ENCODE measurements at regions of chr10 and their contacts with region 1.

Region 1: DNA sequence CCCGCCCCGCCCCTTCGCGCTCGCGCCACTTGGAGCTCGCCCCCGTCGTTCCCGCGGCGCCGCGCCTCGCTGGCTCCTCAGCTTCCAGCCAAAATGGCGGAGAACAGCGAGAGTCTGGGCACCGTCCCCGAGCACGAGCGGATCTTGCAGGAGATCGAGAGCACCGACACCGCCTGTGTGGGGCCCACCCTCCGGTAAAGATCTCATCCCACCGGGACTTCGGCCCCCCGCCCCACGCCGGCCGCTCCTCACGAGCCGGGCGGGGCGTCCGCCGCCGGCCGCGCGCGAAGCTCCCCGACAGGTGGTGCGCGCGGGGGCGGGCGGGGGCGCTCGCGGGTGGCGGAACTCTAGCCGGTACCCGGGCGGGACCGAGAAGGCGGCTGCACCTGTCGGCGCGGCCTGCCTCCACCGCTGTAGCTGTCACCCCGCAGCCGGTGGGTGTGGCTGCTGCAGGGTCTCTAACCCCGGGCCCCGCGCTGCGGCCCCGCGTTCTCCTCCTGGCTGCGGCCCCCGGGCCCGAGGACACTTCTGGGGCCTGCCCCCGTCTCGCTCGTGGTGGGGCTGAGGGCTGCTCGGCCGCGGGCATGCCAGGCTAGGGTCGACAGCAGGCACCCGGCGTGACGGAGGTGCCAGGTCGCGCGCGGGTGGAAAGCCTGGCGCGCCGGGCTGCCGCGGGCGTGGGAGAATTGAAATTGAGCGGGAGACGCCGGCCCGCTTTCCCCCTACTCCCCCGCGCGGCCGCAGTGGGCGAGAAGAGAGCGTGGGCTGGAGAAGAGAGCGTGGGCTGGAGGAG is at the start of gene EXOC6:
- DNase-seq: peak; percentile 77 to 94 (median 85)
- ATAC-seq: peak; percentile 89 to 91 (median 90)
- H3K4me3 ChIP-seq: peak within 1 kb of the TSS; percentile 58 to 69
- H3K4me3 Mint-ChIP-seq: peak within 1 kb of the TSS; percentile 84 to 90 (median 84)
- H3K27ac ChIP-seq: peak within 1 kb of the TSS; percentile 87
- H3K27ac Mint-ChIP-seq: peak within 1 kb of the TSS; percentile 85 to 91
- H3K4me1 ChIP-seq: peaks cover 9 to 12% of the 10 kb centered on the region in 2 experiments
- H3K4me1 Mint-ChIP-seq: peaks cover 23 to 43% (median 32%) of the 10 kb centered on the region in 3 donors
- H3K27me3 ChIP-seq: no peaks in the 10 kb centered on the region
- H3K27me3 Mint-ChIP-seq: no peaks in the 10 kb centered on the region
- total RNA-seq, gene EXOC6: 8.7 to 13.3 (median 9.7) TPM

Region 2: GRCh38 chr10:91049296-91049987 is 1799.2 kb before region 1 on chr10:
- CTCF ChIA-PET with region 1: interaction called in 1 of 2 experiments, 13 read pairs
- POLR2A ChIA-PET with region 1: no interaction called
- DNase-seq: no peak
- ATAC-seq: no peak
- H3K4me3 ChIP-seq: no peak overlapping the region
- H3K4me3 Mint-ChIP-seq: no peak overlapping the region
- H3K27ac ChIP-seq: no peak overlapping the region
- H3K27ac Mint-ChIP-seq: no peak overlapping the region
- H3K4me1 ChIP-seq: no peaks in the 10 kb centered on the region
- H3K4me1 Mint-ChIP-seq: no peaks in the 10 kb centered on the region
- H3K27me3 ChIP-seq: no peaks in the 10 kb centered on the region
- H3K27me3 Mint-ChIP-seq: peaks cover 3 to 5% of the 10 kb centered on the region in 2 donors

Region 3: DNA sequence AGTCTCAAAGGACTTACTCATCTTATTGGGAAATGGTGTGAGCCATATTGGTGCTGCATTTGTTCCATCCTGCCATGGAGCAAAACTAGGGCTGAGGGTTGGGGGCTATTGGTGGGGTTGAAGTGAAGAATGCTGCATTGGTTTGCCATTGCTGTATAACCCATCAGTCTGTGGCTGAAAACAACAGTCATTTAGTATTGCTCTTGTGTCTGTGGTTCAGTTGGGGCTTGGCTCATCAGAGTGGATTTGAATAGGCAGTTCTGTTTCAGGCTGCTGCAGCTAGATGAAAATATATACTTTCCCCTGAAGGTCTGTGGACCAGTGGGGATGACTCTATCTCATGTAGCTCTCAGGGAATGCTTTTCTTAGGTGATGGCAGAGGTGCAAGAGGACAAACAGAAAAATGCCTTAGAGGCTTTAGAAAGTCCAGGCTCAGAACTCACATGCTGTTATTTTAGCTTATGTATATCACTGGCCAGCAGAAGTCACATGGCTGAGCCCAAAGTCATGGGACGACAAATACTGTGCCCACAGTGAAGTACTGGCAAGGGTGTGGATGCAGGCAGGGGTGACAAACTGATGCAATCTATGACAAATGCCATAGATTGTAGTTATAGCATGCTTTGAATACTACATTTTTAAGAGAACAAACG is 15.5 kb before region 1 on chr10:
- CTCF ChIA-PET with region 1: interaction called, 12 to 16 read pairs
- POLR2A ChIA-PET with region 1: interaction called, 4 to 5 read pairs
- DNase-seq: no peak
- ATAC-seq: no peak
- H3K4me3 ChIP-seq: no peak overlapping the region
- H3K4me3 Mint-ChIP-seq: no peak overlapping the region
- H3K27ac ChIP-seq: no peak overlapping the region
- H3K27ac Mint-ChIP-seq: no peak overlapping the region
- H3K4me1 ChIP-seq: peaks cover 3 to 7% of the 10 kb centered on the region in 2 experiments
- H3K4me1 Mint-ChIP-seq: peaks cover 9 to 15% (median 11%) of the 10 kb centered on the region in 3 donors
- H3K27me3 ChIP-seq: no peaks in the 10 kb centered on the region
- H3K27me3 Mint-ChIP-seq: no peaks in the 10 kb centered on the region

Region 4: GRCh38 chr10:93496322-93497041 is 647.8 kb after region 1 on chr10 and contains the start of gene CEP55:
- CTCF ChIA-PET with region 1: no interaction called
- POLR2A ChIA-PET with region 1: interaction called in 1 of 2 experiments, 10 read pairs
- DNase-seq: peak; percentile 84 to 96 (median 93)
- ATAC-seq: peak; percentile 99 to 100 (median 100)
- H3K4me3 ChIP-seq: peak within 1 kb of the TSS; percentile 65 to 89
- H3K4me3 Mint-ChIP-seq: peak within 1 kb of the TSS; percentile 88 to 92 (median 88)
- H3K27ac ChIP-seq: no peak within 1 kb of the TSS
- H3K27ac Mint-ChIP-seq: peak within 1 kb of the TSS; percentile 52 to 71
- H3K4me1 ChIP-seq: peaks cover 4 to 20% of the 10 kb centered on the region in 2 experiments
- H3K4me1 Mint-ChIP-seq: peaks cover 14 to 23% (median 20%) of the 10 kb centered on the region in 3 donors
- H3K27me3 ChIP-seq: no peaks in the 10 kb centered on the region
- H3K27me3 Mint-ChIP-seq: peaks cover 8% of the 10 kb centered on the region in 2 donors
- total RNA-seq, gene CEP55: 0.35 to 0.95 (median 0.49) TPM

Measured in T-cell (primary cell).